ENCODE measurements at regions of chr4 and their contacts with region 1.

Region 1: GRCh38 chr4:81466841-81467671 is 4.7 kb downstream of the RASGEF1B start:
- DNase-seq: peak; percentile 88
- ATAC-seq: peak; percentile 45
- H3K4me3 ChIP-seq: no peak overlapping the region
- H3K27ac ChIP-seq: peak overlapping the region; percentile 57
- H3K4me1 ChIP-seq: peaks cover 16% of the 10 kb centered on the region
- H3K27me3 ChIP-seq: no peaks in the 10 kb centered on the region
- CTCF ChIP-seq: peak; percentile 85

Region 2: GRCh38 chr4:81405894-81406401 is 61.1 kb before region 1 on chr4:
- CTCF ChIA-PET with region 1: no interaction called
- POLR2A ChIA-PET with region 1: no interaction called
- intact Hi-C with region 1: loop called (anchors 1 kb)
- DNase-seq: peak; percentile 69
- ATAC-seq: peak; percentile 50; the same call in 1 of the 2 replicates
- H3K4me3 ChIP-seq: no peak overlapping the region
- H3K27ac ChIP-seq: no peak overlapping the region
- H3K4me1 ChIP-seq: no peaks in the 10 kb centered on the region
- H3K27me3 ChIP-seq: peaks cover 15% of the 10 kb centered on the region
- CTCF ChIP-seq: peak; percentile 84

Region 3: GRCh38 chr4:81454499-81454898 is 12.6 kb before region 1 on chr4:
- CTCF ChIA-PET with region 1: no interaction called
- POLR2A ChIA-PET with region 1: no interaction called
- intact Hi-C with region 1: loop called (anchors 1 kb)
- DNase-seq: peak; percentile 71
- ATAC-seq: peak; percentile 54
- H3K4me3 ChIP-seq: no peak overlapping the region
- H3K27ac ChIP-seq: peak overlapping the region; percentile 14; the same call in 1 of the 2 replicates
- H3K4me1 ChIP-seq: peaks cover 38% of the 10 kb centered on the region
- H3K27me3 ChIP-seq: no peaks in the 10 kb centered on the region
- CTCF ChIP-seq: no peak

Region 4: GRCh38 chr4:81844717-81845116 is 377.7 kb after region 1 on chr4:
- CTCF ChIA-PET with region 1: no interaction called
- POLR2A ChIA-PET with region 1: no interaction called
- intact Hi-C with region 1: loop called (anchors 1 kb)
- DNase-seq: peak; percentile 86
- ATAC-seq: peak; percentile 78
- H3K4me3 ChIP-seq: no peak overlapping the region
- H3K27ac ChIP-seq: no peak overlapping the region
- H3K4me1 ChIP-seq: no peaks in the 10 kb centered on the region; the same call in 1 of the 2 replicates
- H3K27me3 ChIP-seq: peaks cover 11% of the 10 kb centered on the region; the same call in 1 of the 2 replicates
- CTCF ChIP-seq: peak; percentile 82

Region 5: GRCh38 chr4:82268050-82268825 is 801.2 kb after region 1 on chr4:
- CTCF ChIA-PET with region 1: no interaction called
- POLR2A ChIA-PET with region 1: no interaction called
- intact Hi-C with region 1: loop called (anchors 1 kb)
- DNase-seq: peak; percentile 59
- ATAC-seq: peak; percentile 97
- H3K4me3 ChIP-seq: no peak overlapping the region
- H3K27ac ChIP-seq: no peak overlapping the region
- H3K4me1 ChIP-seq: no peaks in the 10 kb centered on the region
- H3K27me3 ChIP-seq: no peaks in the 10 kb centered on the region
- CTCF ChIP-seq: peak; percentile 81

Measured in PC-3 (cell line).